Endothelial cell of umbilical vein (primary cell): ENCODE measurements at regions of chr1 and their contacts with region 1.

Region 1: GRCh38 chr1:225474986-225475820 is 47.4 kb upstream of the LBR start:
- DNase-seq: peak; percentile 74
- H3K4me3 ChIP-seq: no peak overlapping the region
- H3K27ac ChIP-seq: no peak overlapping the region
- H3K4me1 ChIP-seq: no peaks in the 10 kb centered on the region
- H3K27me3 ChIP-seq: no peaks in the 10 kb centered on the region
- CTCF ChIP-seq: peak; percentile 99 to 100
- POLR2A ChIP-seq: no peak

Region 2: GRCh38 chr1:225441314-225442122 is 33.7 kb before region 1 on chr1:
- CTCF ChIA-PET with region 1: interaction called, 13 read pairs
- POLR2A ChIA-PET with region 1: interaction called, 5 read pairs
- dilution Hi-C with region 1: no loop called
- intact Hi-C with region 1: no loop called
- DNase-seq: no peak
- H3K4me3 ChIP-seq: no peak overlapping the region
- H3K27ac ChIP-seq: no peak overlapping the region
- H3K4me1 ChIP-seq: peaks cover 33% of the 10 kb centered on the region
- H3K27me3 ChIP-seq: no peaks in the 10 kb centered on the region
- CTCF ChIP-seq: peak; percentile 20 to 22
- POLR2A ChIP-seq: no peak

Region 3: GRCh38 chr1:225603538-225604354 is 128.5 kb after region 1 on chr1:
- CTCF ChIA-PET with region 1: no interaction called
- POLR2A ChIA-PET with region 1: no interaction called
- dilution Hi-C with region 1: no loop called
- intact Hi-C with region 1: no loop called
- DNase-seq: peak; percentile 87
- H3K4me3 ChIP-seq: no peak overlapping the region
- H3K27ac ChIP-seq: peak overlapping the region; percentile 39
- H3K4me1 ChIP-seq: peaks cover 27% of the 10 kb centered on the region
- H3K27me3 ChIP-seq: no peaks in the 10 kb centered on the region
- CTCF ChIP-seq: no peak
- POLR2A ChIP-seq: no peak

Region 4: DNA sequence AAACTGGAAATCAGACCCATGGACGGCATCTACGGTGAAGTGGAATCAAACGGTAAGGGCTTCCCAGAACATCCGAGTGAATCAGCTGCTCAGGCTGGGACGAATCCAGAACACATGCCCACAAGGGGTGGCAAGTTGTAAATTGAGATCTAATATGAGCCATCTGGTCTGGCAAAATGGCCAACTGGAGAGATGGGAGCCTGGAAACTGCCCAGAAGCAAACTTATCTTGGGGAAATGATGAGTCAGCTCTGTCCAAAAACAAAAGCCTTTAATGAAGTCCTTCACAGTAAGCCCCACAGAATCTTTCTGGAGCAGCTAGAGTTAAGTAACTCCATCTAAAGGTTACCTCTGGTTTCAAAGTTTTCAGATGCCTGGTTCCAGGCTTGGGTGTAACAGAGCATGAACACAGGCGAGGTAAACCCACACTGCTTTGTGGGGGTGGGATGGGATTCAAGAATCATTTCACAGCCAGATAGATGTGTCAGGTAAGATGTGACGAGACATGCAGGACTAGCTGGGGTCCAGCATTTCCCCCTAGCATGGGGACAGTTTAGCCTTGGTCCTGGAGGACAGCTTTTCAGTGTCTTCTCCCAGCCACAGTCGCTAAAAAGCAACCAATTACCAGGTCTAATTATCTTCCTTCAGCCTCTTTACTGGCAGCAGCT is 291.9 kb after region 1 on chr1:
- CTCF ChIA-PET with region 1: interaction called, 81 read pairs
- POLR2A ChIA-PET with region 1: no interaction called
- dilution Hi-C with region 1: no loop called
- intact Hi-C with region 1: loop called (anchors 1 kb)
- DNase-seq: peak; percentile 84
- H3K4me3 ChIP-seq: no peak overlapping the region
- H3K27ac ChIP-seq: peak overlapping the region; percentile 58
- H3K4me1 ChIP-seq: peaks cover 47% of the 10 kb centered on the region
- H3K27me3 ChIP-seq: no peaks in the 10 kb centered on the region
- CTCF ChIP-seq: no peak
- POLR2A ChIP-seq: no peak

Region 5: GRCh38 chr1:225809842-225810578 is 334.8 kb after region 1 on chr1 and contains the start of gene EPHX1:
- CTCF ChIA-PET with region 1: interaction called, 14 read pairs
- POLR2A ChIA-PET with region 1: no interaction called
- dilution Hi-C with region 1: no loop called
- intact Hi-C with region 1: loop called (anchors 1 kb)
- DNase-seq: peak; percentile 85
- H3K4me3 ChIP-seq: peak within 1 kb of the TSS in 2 of 3 experiments; percentile 43 to 70
- H3K27ac ChIP-seq: no peak within 1 kb of the TSS
- H3K4me1 ChIP-seq: peaks cover 8% of the 10 kb centered on the region
- H3K27me3 ChIP-seq: no peaks in the 10 kb centered on the region
- CTCF ChIP-seq: peak in 1 of 2 donors; percentile 40
- POLR2A ChIP-seq: peak; percentile 96
- total RNA-seq, gene EPHX1: 19.1 and 23.7 TPM in 2 replicates

Region 6: DNA sequence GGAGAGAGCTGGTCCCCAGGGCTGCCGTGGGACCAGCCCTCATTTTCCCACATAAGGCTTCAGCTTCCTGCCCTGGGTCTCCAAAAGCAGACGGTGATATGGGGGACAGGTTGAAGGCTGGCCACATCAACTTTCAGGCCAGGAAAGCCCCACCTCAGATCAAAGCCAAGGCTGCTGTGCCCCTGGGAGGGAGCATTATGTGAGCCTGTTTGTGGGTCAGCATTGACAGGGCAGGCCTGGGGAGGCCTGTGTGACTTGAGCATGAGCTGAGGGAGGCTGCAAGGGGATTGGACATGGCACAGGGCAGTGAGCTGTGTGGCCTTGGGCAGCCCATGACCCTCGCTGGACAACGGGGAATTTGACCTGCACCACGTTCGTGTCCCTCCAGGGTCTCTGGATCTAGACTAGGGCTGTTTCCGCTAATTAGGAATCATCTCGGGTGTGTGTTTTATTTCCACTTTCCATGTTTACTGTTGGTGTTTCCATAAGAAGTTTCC is 431.2 kb after region 1 on chr1:
- CTCF ChIA-PET with region 1: interaction called, 82 read pairs
- POLR2A ChIA-PET with region 1: no interaction called
- dilution Hi-C with region 1: no loop called
- intact Hi-C with region 1: loop called (anchors 1 kb)
- DNase-seq: no peak
- H3K4me3 ChIP-seq: no peak overlapping the region
- H3K27ac ChIP-seq: no peak overlapping the region
- H3K4me1 ChIP-seq: no peaks in the 10 kb centered on the region
- H3K27me3 ChIP-seq: no peaks in the 10 kb centered on the region
- CTCF ChIP-seq: no peak
- POLR2A ChIP-seq: no peak

Region 7: GRCh38 chr1:225977937-225978748 is 502.9 kb after region 1 on chr1:
- CTCF ChIA-PET with region 1: interaction called, 27 read pairs
- POLR2A ChIA-PET with region 1: no interaction called
- dilution Hi-C with region 1: no loop called
- intact Hi-C with region 1: loop called (anchors 1 kb)
- DNase-seq: no peak
- H3K4me3 ChIP-seq: no peak overlapping the region
- H3K27ac ChIP-seq: no peak overlapping the region
- H3K4me1 ChIP-seq: no peaks in the 10 kb centered on the region
- H3K27me3 ChIP-seq: no peaks in the 10 kb centered on the region
- CTCF ChIP-seq: no peak
- POLR2A ChIP-seq: no peak